Panc1 (cell line): ENCODE measurements at regions of chr10 and their contacts with region 1.

Region 1: DNA sequence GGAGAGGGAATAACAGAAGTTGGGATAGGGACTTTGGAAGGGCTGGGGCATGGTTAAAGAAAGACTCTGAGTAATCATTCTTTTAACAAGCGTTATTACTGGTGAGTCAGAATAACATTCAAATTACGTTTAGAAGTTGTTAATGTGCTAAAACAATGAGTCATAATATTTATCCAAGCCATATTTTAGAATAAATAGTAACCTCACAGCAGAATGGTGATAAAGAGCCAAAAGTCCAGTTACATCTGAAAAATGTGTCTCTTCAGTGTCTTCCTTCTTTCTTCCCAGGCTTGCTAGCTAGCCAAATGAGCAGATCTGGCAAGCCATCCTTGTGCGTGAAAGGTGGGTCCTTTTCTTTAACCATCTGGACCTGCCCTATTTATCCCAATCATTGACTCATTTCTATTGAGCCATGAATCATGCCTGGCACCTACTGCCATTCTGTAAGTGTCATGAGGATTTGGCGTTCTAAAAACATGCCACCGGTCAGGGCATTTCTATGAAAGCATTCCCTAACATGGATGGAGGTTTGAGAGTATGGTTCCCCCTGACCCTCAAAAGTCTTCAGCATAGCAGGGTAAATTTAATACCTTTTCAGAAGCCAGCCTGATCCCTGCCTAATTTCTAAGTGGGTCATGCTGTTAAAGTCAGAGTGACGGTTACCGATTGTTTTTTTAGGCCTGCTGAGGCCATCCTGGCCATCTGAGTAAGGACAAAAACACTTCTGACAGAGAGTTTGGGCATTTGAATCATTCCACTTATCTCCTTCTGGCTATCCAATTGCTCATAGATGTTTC is 26.8 kb downstream of the MYPN start:
- DNase-seq: peak; percentile 99
- ATAC-seq: peak; percentile 96
- H3K4me3 ChIP-seq: peak overlapping the region; percentile 2 to 37; a peak in 2 of 4 replicates
- H3K27ac ChIP-seq: peak overlapping the region; percentile 98
- H3K4me1 ChIP-seq: peaks cover 75% of the 10 kb centered on the region
- H3K27me3 ChIP-seq: no peaks in the 10 kb centered on the region
- CTCF ChIP-seq: no peak

Region 2: GRCh38 chr10:67788025-67788886 is 347.9 kb before region 1 on chr10:
- CTCF ChIA-PET with region 1: no interaction called
- POLR2A ChIA-PET with region 1: no interaction called
- in situ Hi-C with region 1: no loop called
- intact Hi-C with region 1: no loop called
- DNase-seq: peak; percentile 24
- ATAC-seq: peak; percentile 84
- H3K4me3 ChIP-seq: no peak overlapping the region
- H3K27ac ChIP-seq: no peak overlapping the region
- H3K4me1 ChIP-seq: no peaks in the 10 kb centered on the region
- H3K27me3 ChIP-seq: no peaks in the 10 kb centered on the region; the same call in 1 of the 2 replicates
- CTCF ChIP-seq: peak; percentile 91

Region 3: GRCh38 chr10:68107651-68108449 is 28.3 kb before region 1 on chr10:
- CTCF ChIA-PET with region 1: interaction called, 3 read pairs
- POLR2A ChIA-PET with region 1: interaction called, 13 read pairs
- in situ Hi-C with region 1: no loop called
- intact Hi-C with region 1: no loop called
- DNase-seq: no peak
- ATAC-seq: no peak
- H3K4me3 ChIP-seq: peak overlapping the region; percentile 57 to 65
- H3K27ac ChIP-seq: peak overlapping the region; percentile 100
- H3K4me1 ChIP-seq: peaks cover 57% of the 10 kb centered on the region
- H3K27me3 ChIP-seq: no peaks in the 10 kb centered on the region
- CTCF ChIP-seq: no peak